AG04449 (cell line): ENCODE measurements at regions of chr9 and their contacts with region 1.

Region 1: DNA sequence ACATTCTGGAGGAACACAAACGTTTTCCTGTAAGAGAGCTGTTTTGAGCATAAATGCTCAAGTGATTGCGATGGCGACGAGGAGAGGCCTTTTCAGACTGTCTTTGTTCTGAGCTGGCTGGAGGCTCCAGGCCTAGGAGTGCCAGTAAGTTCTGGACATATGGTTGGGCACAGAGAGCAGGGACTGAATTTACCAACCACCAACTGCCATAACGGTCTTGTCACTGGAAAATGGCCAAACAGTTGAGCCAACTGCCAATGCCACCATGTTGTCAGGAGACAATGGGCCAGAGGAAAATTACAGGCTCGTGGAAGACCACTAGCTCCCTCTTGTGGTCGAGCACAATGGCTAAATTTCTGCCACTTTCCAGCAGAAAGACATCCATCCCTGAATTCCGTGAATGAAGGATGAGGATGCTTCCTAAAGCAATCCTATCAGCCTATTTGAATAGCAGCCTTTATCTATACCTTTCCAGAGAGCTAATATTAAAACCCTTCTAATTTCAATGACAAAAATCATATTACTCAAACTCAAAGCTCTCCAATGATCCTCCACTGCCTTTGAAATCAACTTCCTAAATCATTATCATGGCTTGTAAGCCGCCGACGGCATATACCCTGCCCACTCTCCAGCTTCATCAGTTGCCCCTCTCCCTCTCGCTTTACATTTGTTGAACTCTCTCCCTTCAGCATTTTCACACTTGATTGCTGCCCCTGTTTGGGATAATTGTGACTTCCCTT is 66.9 kb upstream of the GLIS3 start:
- DNase-seq: no peak
- H3K4me3 ChIP-seq: no peak overlapping the region
- CTCF ChIP-seq: peak; percentile 73

Region 2: DNA sequence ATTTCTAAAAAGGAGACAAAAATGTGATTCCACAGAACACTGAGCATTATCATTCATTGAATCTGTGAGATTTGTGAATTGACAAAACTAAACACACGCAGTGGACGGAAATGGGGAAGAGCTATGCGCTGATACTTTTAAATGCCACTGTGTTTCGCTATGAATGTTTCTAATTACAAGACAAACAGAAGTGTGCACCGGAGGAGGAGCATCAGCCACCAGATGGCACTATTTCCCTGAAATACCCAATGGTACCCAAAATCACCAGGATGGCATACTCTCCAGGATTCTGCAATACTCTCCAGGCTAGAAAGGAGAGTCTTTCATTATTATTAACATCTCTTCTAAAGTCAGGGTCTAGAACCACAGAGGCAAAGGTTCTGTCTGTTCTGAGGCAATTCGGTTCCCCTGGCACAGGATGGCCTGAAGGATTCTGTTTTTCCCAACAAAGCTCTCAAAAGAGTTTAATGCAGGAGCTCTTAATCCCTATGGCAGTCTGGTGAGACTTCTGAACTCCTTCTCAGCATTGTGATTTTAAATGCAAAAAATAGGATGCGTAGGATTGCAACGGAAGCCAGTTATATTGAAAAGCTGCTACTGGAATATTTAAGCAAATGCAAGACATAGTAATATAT is 1509.1 kb before region 1 on chr9:
- CTCF ChIA-PET with region 1: interaction called, 28 read pairs
- POLR2A ChIA-PET with region 1: no interaction called
- DNase-seq: no peak
- H3K4me3 ChIP-seq: no peak overlapping the region
- CTCF ChIP-seq: peak; percentile 80

Region 3: GRCh38 chr9:3732077-3733038 is 634.4 kb before region 1 on chr9:
- CTCF ChIA-PET with region 1: interaction called, 27 read pairs
- POLR2A ChIA-PET with region 1: no interaction called
- DNase-seq: peak; percentile 74
- H3K4me3 ChIP-seq: peak overlapping the region; percentile 29; the same call in 1 of the 2 replicates
- CTCF ChIP-seq: peak; percentile 47

Region 4: DNA sequence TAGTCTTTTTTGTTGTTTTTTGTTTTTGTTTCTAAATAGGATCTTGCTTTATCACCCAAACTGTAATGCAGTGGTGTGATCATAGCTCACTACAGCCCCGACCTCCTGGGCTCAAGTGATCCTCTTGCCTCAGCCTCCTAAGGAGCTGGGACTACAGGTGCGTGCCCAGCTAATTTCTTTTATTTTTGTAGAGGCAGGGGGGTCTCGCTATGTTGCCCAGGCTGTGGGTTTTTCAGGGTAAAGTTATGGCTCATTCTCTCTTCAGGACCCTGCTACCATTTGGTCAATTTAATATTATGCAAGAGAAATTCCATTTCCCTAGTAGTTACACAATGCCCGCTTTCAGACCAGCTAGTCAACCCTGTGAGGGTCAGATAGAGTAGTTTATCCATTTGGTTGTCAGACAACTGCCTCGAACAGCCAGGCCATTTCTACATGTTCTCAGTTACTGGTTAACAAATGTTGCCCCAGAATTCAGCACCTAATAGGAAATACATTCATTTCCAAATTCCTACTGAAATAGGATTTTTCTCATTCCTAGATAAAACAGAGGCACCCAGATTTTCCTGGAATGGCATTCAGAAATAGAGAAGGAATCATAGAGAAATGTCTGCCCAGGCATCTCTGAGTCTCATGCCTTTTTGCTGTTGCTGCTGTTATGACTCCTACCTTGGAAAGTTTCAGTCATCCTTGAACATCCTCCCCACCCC is 60.5 kb before region 1 on chr9:
- CTCF ChIA-PET with region 1: interaction called, 23 read pairs
- POLR2A ChIA-PET with region 1: no interaction called
- DNase-seq: no peak
- H3K4me3 ChIP-seq: no peak overlapping the region
- CTCF ChIP-seq: no peak

Region 5: GRCh38 chr9:4327504-4328191 is 39.1 kb before region 1 on chr9:
- CTCF ChIA-PET with region 1: interaction called, 18 read pairs
- POLR2A ChIA-PET with region 1: no interaction called
- DNase-seq: no peak
- H3K4me3 ChIP-seq: no peak overlapping the region
- CTCF ChIP-seq: no peak

Region 6: GRCh38 chr9:4353236-4353635 is 13.5 kb before region 1 on chr9:
- CTCF ChIA-PET with region 1: interaction called, 55 read pairs
- POLR2A ChIA-PET with region 1: no interaction called
- DNase-seq: no peak
- H3K4me3 ChIP-seq: no peak overlapping the region
- CTCF ChIP-seq: no peak

Region 7: DNA sequence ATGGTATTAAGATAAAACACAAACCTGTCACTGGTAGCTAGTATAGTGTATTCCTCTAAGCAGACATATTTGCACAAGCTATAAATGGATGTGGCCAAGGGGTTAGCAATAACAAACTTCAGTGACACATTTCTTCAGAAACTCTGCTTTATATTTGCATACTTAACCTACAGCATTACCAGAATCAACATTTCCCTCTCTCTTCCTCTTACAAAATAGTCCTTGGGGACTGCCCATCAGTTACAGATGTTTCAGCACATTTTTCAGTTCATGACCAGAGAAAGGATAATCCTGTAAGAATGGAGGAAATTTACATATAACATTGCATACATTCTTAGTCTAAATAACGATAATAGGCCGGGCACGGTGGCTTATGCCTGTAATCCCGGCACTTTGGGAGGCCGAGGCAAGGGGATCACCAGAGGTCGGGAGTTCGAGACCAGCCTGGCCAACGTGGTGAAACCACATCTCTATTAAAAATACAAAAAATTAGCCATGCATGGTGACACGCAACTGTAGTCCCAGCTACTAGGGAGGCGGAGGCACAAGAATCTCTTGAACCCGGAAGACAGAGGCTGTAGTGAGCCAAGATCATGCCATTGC is 98.3 kb after region 1 on chr9:
- CTCF ChIA-PET with region 1: no interaction called
- POLR2A ChIA-PET with region 1: no interaction called
- DNase-seq: no peak
- H3K4me3 ChIP-seq: no peak overlapping the region
- CTCF ChIP-seq: no peak